PC-3 (cell line): ENCODE measurements at regions of chr11 and their contacts with region 1.

Region 1: DNA sequence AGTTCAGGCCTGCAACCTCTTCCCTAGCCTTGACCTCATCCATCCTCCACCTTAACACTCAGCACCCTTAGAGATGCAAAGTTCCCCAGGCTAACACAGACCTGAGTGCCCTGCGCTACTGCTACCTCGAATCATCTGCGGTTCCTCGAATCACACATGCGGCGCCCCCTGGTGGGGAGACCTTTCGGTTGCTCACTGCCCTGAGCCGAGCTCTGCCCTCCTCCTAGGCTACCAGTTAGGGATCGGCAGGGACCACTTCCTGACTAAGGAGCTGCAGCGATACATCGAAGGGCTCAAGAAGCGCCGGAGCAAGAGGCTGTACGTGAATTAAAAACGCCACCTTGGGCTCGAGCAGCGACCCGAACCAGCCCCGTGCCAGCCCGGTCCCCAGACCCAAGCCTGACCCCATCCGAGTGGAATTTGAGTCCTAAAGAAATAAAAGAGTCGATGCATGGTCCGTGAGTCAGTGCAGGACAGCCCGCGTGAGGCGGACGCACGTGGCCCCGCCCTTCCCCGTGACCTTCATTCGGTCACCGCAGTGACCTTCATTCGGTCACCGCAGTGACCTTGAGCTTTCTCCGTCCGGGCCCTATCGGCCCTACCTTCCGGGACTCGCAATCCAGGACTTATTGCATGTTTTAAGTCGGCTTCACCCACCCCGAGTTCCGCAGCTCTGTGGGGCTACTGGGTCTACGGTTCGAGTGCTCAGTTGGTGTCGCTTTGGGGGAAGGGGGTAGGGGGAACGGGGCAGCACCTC is 830 bp upstream of the ESRRA start:
- DNase-seq: peak; percentile 95
- ATAC-seq: peak; percentile 30
- H3K4me3 ChIP-seq: peak overlapping the region; percentile 74
- H3K27ac ChIP-seq: peak overlapping the region; percentile 85
- H3K4me1 ChIP-seq: peaks cover 35% of the 10 kb centered on the region
- H3K27me3 ChIP-seq: peaks cover 12% of the 10 kb centered on the region
- CTCF ChIP-seq: peak; percentile 99

Region 2: GRCh38 chr11:64185816-64186498 is 118.5 kb before region 1 on chr11 and contains the start of gene STIP1:
- CTCF ChIA-PET with region 1: interaction called, 4 read pairs
- POLR2A ChIA-PET with region 1: no interaction called
- intact Hi-C with region 1: loop called (anchors 1 kb)
- DNase-seq: peak; percentile 100
- ATAC-seq: peak; percentile 86
- H3K4me3 ChIP-seq: peak within 1 kb of the TSS; percentile 81
- H3K27ac ChIP-seq: peak within 1 kb of the TSS; percentile 59
- H3K4me1 ChIP-seq: peaks cover 27% of the 10 kb centered on the region
- H3K27me3 ChIP-seq: no peaks in the 10 kb centered on the region
- CTCF ChIP-seq: peak; percentile 39; the same call in 1 of the 2 replicates
- total RNA-seq, gene STIP1: 543 and 557 TPM in 2 replicates

Region 3: DNA sequence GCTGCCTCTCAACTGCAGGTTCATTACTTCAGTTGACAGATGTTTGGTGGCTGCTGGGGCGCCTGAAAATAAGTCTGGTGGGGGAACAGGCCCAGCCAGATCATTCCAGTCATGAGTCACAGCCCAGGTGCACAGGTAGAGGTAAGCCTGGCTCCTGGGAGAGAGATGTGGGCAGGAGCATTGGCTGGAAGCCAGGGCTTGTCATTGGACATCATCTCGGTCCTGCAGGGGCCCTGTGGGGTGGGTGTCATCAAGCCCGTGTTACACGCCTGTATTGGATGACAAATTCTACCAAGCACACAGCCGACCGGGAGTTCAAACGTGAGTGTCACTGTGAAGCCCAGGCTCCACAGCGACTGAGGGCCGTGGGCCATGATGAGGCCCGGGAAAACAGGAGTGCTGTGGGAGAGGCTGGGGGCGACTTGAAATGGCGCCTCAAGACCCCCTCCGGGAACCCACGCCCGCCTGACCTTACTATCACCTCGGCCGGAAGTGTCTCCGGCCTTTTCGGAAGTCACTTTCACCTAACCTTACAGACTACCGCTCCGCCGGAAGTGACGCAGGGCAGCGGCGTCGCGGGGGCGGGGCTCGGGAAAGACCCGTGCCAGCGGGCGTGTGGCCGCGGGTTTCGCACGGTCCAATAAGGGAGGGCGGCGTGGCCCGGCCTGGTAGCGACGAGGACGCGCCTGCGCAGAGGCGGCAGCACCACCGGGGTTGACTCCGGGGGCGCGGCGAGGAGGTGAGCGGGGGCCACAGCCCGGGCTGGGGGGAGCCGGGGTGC is 63.9 kb before region 1 on chr11 and contains the start of gene FKBP2:
- CTCF ChIA-PET with region 1: interaction called, 4 read pairs
- POLR2A ChIA-PET with region 1: interaction called, 9 read pairs
- intact Hi-C with region 1: loop called (anchors 2 kb)
- DNase-seq: peak; percentile 99
- ATAC-seq: peak; percentile 23
- H3K4me3 ChIP-seq: peak within 1 kb of the TSS; percentile 87
- H3K27ac ChIP-seq: peak within 1 kb of the TSS; percentile 98
- H3K4me1 ChIP-seq: peaks cover 71% of the 10 kb centered on the region
- H3K27me3 ChIP-seq: no peaks in the 10 kb centered on the region
- CTCF ChIP-seq: no peak
- total RNA-seq, gene FKBP2: 215 and 248 TPM in 2 replicates

Region 4: GRCh38 chr11:64269380-64270234 is 34.9 kb before region 1 on chr11:
- CTCF ChIA-PET with region 1: interaction called, 13 read pairs
- POLR2A ChIA-PET with region 1: no interaction called
- intact Hi-C with region 1: loop called (anchors 2 kb)
- DNase-seq: peak; percentile 100
- ATAC-seq: peak; percentile 80
- H3K4me3 ChIP-seq: peak overlapping the region; percentile 69
- H3K27ac ChIP-seq: peak overlapping the region; percentile 83
- H3K4me1 ChIP-seq: peaks cover 35% of the 10 kb centered on the region
- H3K27me3 ChIP-seq: no peaks in the 10 kb centered on the region
- CTCF ChIP-seq: no peak

Region 5: DNA sequence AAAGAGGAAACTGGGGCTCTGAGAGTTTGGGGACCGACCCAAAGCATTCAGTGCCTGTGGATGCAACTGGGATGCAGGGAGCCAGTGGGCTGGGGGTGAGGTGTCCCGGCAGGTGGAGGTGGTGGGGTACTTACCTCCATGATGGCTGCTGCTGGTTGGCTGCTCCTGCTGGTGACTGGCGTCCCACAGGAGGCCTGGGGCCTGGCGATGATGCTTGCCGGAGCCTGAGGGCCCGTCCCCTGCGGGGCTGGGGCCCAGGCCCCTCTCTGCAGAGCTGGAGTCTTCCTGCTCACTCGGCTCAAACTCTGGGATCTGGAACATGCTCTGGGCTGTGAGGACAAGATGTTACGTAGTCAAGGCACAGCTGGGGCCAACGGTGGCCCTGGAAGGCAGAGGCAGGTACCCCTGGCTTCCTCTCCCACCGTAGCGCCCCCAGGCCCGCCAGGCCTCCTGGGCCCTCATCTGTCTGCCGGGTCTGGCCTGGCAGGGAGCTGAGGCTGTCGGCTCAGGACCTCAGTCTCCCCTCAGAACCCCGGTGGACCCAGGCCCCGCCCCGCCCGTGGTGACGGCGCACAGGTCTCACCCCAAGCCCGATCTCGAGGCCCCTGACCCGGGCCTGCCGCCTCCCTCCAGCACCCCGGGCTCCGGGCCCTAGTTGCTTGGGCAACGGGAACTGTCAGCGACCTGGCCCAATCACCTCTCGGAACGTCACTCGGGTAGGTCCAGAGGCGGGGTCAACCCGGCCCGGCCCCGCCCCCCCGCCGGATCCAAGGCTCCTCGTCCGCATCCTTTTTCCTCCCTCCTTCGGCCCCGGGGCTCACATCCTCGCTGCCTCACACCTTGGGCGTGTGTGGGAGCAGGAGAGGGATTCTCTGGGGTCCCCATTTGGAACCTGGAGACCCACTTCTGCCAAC is 20.2 kb before region 1 on chr11 and contains the start of gene BAD:
- CTCF ChIA-PET with region 1: interaction called, 5 read pairs
- POLR2A ChIA-PET with region 1: interaction called, 5 read pairs
- intact Hi-C with region 1: loop called (anchors 2 kb)
- DNase-seq: peak; percentile 97
- ATAC-seq: peak; percentile 89
- H3K4me3 ChIP-seq: peak within 1 kb of the TSS; percentile 73
- H3K27ac ChIP-seq: peak within 1 kb of the TSS; percentile 62
- H3K4me1 ChIP-seq: peaks cover 18% of the 10 kb centered on the region
- H3K27me3 ChIP-seq: no peaks in the 10 kb centered on the region
- CTCF ChIP-seq: no peak
- total RNA-seq, gene BAD: 360 and 368 TPM in 2 replicates

Region 6: DNA sequence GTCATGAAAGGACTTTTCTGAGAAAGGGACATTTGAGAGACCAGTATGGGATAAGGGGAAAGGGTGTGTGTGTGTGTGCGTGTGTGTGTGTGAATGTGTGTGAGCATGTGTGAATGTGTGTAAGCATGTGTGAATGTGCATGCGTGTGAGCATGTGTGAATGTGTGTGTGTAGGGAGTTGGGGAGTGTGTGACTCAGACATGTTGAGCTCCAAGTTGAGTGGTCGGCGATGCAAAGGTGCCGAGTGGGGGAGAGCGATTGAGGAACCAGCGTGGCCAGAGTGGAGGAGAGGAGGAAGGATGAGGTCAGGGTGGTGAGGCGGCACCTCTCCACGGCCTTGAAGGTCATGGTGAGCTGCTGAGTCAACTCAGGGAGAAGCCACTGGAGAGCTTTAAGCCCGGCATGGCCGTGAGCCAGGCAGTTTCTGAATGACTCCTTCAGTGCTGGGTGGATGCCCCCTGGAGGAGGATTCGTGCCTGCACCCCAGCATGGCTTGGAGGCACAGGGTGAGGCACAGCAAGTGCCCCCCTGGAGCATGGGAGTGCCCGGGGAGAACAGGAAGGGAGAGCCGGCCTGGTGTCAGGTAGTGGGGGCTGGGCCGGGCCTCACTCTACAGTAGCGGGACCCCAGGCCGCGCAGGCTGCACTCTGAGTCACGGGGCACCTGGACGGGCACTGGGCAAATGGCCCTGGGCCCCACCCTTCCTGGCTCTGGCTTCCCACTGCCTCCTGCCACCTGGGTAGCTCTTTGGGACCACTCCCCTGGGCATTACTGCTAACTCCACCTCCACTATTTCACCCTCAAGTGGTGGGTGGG is 27.3 kb after region 1 on chr11:
- CTCF ChIA-PET with region 1: interaction called, 12 read pairs
- POLR2A ChIA-PET with region 1: no interaction called
- intact Hi-C with region 1: no loop called
- DNase-seq: peak; percentile 96
- ATAC-seq: peak; percentile 56
- H3K4me3 ChIP-seq: peak overlapping the region; percentile 22; the same call in 1 of the 2 replicates
- H3K27ac ChIP-seq: peak overlapping the region; percentile 88
- H3K4me1 ChIP-seq: peaks cover 37% of the 10 kb centered on the region
- H3K27me3 ChIP-seq: no peaks in the 10 kb centered on the region
- CTCF ChIP-seq: peak; percentile 85